Cardiac septum (tissue), 1 donor: ENCODE measurements at regions of chr2 and their contacts with region 1.

Region 1: GRCh38 chr2:190880378-190881073 is at the start of gene GLS:
- DNase-seq: peak; percentile 99
- total RNA-seq, gene GLS: 80.2 TPM

Region 2: DNA sequence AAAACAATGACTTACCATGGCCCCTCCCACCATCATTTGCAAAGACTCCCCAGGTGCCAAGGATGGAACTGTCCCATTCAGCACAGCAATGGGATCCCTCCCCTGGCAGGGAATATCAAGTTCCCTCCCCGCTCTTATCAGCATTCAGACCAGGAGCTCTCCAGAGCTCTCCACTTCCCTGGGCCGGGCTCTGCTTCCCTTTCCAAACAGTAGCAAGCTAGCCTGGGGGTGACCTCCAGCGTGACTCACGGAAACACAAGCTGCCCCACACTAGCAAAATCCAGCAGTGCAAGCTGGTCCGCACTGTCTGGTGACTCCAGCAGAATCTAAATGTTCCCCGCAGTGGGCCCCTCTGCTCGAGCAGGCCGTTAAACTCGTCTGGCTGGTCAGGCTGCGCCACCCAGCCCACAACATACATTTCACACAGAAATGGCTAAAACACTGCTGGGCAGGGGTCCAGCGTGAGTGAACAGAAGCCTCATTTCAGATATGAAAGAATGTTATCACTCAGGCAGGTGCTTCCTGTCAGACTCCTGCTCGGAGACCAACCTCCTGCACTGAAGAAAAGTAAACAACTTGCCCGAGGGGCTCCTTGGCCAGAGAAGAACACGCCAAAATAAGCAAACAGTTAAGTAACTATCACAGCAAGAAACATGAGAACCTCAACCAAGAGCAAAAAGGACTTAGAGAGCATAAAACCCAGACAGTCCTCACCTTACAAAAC is 99.5 kb after region 1 on chr2:
- intact Hi-C with region 1: loop called (anchors 5 kb)
- DNase-seq: peak; percentile 88

Region 3: GRCh38 chr2:191013932-191014652 is 133.6 kb after region 1 on chr2 and contains the start of gene STAT1:
- intact Hi-C with region 1: loop called (anchors 2 kb)
- DNase-seq: peak; percentile 97
- total RNA-seq, gene STAT1: 53.2 TPM